AG04450 (cell line): ENCODE measurements at regions of chr16 and their contacts with region 1.

Region 1: DNA sequence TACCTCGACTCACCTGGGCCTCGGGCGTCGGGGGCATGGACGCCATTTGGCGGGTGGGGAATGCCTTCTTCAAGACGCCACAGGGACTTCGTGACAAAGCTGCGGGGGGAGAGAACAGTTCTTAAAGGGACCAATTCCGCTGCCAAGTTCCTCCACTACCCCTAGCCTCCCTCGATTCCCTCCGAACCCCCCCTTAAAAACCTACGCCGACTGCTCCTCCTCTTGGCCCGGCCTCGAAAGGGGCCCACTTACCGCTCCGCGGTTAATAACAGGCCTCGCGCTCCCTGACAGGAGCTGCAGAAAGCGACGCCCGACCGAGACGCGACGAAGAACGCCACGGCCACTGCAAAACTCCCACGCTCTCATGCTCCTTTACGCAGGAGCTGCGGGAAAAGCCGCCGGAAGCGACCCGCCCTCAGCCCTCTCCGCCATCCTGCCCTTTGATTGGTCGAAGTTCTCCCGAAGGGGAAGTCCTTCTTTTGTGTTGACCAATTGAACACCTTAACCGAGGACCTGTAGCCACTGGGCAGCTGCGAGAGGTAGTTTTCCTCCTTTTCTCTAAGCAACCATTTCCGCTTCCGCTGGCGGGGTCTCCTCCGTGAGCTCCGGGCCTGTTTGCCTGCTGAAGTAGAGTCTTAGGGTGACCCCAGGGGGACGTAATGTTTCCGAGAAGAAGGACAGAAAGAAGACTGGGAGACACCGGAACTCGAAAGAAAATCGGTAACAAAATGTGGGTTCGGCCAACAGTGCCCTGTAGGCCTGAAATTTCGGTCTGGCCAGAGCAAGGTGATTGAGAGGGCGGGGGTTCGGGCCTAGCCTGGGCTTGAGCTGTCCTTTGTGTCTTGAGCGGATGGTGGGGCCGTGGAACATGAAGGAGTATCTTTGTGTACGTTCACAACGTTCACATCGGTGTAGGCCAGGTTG is at the starts of genes NAA60 and ZNF597:
- DNase-seq: peak; percentile 74
- H3K4me3 ChIP-seq: peak within 1 kb of the TSS; percentile 78
- H3K27ac ChIP-seq: peak within 1 kb of the TSS; percentile 80
- H3K27me3 ChIP-seq: no peaks in the 10 kb centered on the region
- CTCF ChIP-seq: no peak
- polyA plus RNA-seq, gene NAA60: 23.1 and 28.8 TPM in 2 replicates
- polyA plus RNA-seq, gene ZNF597: 1.6 and 1.8 TPM in 2 replicates

Region 2: GRCh38 chr16:3457434-3458252 is 14.3 kb after region 1 on chr16:
- CTCF ChIA-PET with region 1: no interaction called
- POLR2A ChIA-PET with region 1: interaction called, 20 read pairs
- DNase-seq: peak; percentile 62
- H3K4me3 ChIP-seq: peak overlapping the region; percentile 96
- H3K27ac ChIP-seq: peak overlapping the region; percentile 77
- H3K27me3 ChIP-seq: no peaks in the 10 kb centered on the region
- CTCF ChIP-seq: peak; percentile 45